ENCODE measurements at regions of chr2 and their contacts with region 1.

Region 1: GRCh38 chr2:208025037-208025813 is at the start of gene PLEKHM3:
- DNase-seq: peak; percentile 46 to 73 (median 57)
- H3K4me3 ChIP-seq: peak within 1 kb of the TSS; percentile 79
- H3K4me3 Mint-ChIP-seq: peak within 1 kb of the TSS; percentile 90 to 100 (median 97)
- H3K27ac ChIP-seq: peak within 1 kb of the TSS; percentile 68
- H3K27ac Mint-ChIP-seq: peak within 1 kb of the TSS; percentile 79 to 96 (median 94)
- H3K4me1 ChIP-seq: no peaks in the 10 kb centered on the region
- H3K4me1 Mint-ChIP-seq: peaks cover 26 to 40% (median 37%) of the 10 kb centered on the region in 3 donors
- H3K27me3 ChIP-seq: no peaks in the 10 kb centered on the region
- H3K27me3 Mint-ChIP-seq: no peaks in the 10 kb centered on the region
- total RNA-seq, gene PLEKHM3: 6.9 to 7.2 TPM

Region 2: DNA sequence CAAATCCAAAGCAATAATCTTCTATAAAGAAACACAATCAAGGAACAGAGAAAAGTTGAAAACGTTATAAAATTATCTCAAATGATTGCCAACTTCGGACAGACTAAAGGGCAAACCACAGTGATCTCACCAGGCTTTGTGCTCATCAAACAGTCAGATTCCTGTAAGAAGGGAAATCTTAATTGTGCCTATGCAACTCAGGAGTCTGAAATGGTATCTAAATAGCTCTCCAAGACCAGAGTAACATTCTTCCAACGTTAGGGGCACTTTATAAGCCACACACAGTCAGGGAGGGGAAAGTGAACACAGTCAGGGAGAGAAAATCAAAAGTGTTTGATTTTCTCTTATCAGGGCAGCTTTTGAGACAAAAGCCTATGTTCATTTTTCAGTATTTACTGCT is 29.3 kb before region 1 on chr2:
- CTCF ChIA-PET with region 1: no interaction called
- POLR2A ChIA-PET with region 1: no interaction called
- DNase-seq: no peak
- H3K4me3 ChIP-seq: no peak overlapping the region
- H3K4me3 Mint-ChIP-seq: no peak overlapping the region
- H3K27ac ChIP-seq: no peak overlapping the region
- H3K27ac Mint-ChIP-seq: peak overlapping the region in 2 of 8 donors; percentile 21 to 39
- H3K4me1 ChIP-seq: no peaks in the 10 kb centered on the region
- H3K4me1 Mint-ChIP-seq: peaks cover 21 to 58% (median 39%) of the 10 kb centered on the region in 3 donors
- H3K27me3 ChIP-seq: no peaks in the 10 kb centered on the region
- H3K27me3 Mint-ChIP-seq: no peaks in the 10 kb centered on the region

Region 3: GRCh38 chr2:208040199-208041171 is 15.3 kb after region 1 on chr2:
- CTCF ChIA-PET with region 1: interaction called, 12 read pairs
- POLR2A ChIA-PET with region 1: no interaction called
- DNase-seq: peak; percentile 33 to 73 (median 40)
- H3K4me3 ChIP-seq: no peak overlapping the region
- H3K4me3 Mint-ChIP-seq: no peak overlapping the region
- H3K27ac ChIP-seq: no peak overlapping the region
- H3K27ac Mint-ChIP-seq: no peak overlapping the region
- H3K4me1 ChIP-seq: no peaks in the 10 kb centered on the region
- H3K4me1 Mint-ChIP-seq: no peaks in the 10 kb centered on the region
- H3K27me3 ChIP-seq: no peaks in the 10 kb centered on the region
- H3K27me3 Mint-ChIP-seq: peaks cover 6 to 12% of the 10 kb centered on the region in 2 donors

Region 4: DNA sequence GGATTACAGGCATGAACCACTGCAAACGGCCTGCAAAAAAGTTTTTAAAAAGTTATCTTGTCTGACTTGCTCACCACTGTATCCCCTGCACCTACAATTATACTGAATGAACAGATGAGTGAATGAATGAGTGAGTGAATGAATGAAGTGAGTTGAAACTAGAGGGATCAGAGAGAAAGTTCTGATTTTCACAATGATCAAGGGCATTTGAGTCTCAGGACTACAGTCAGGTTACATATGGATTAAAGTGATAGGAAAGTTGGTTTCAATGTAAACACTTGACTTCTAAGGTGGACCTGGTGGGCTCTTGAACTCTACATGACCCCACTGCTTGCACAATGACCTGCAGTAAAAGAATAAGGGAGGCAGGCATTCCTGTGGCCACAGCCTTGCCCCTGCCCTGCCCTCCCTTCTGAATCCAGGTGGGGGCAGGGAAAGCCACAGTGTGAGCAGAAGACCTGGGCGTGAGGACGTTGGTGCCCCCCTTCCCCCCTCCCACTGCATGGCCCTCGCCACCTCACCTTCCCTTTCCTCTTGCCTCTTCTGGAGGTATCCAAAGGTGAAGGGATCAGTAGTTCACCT is 153.9 kb after region 1 on chr2:
- CTCF ChIA-PET with region 1: no interaction called
- POLR2A ChIA-PET with region 1: no interaction called
- DNase-seq: no peak
- H3K4me3 ChIP-seq: no peak overlapping the region
- H3K4me3 Mint-ChIP-seq: no peak overlapping the region
- H3K27ac ChIP-seq: no peak overlapping the region
- H3K27ac Mint-ChIP-seq: peak overlapping the region in 1 of 8 donors; percentile 36
- H3K4me1 ChIP-seq: no peaks in the 10 kb centered on the region
- H3K4me1 Mint-ChIP-seq: peaks cover 4 to 8% (median 6%) of the 10 kb centered on the region in 3 donors
- H3K27me3 ChIP-seq: no peaks in the 10 kb centered on the region
- H3K27me3 Mint-ChIP-seq: peaks cover 2 to 26% of the 10 kb centered on the region in 2 donors

Measured in CD8-positive, alpha-beta memory T cell (primary cell).